Left ventricle myocardium inferior (tissue), 1 donor: ENCODE measurements at regions of chr17 and their contacts with region 1.

Region 1: GRCh38 chr17:49556223-49556971 is 19.3 kb upstream of the NXPH3 start:
- DNase-seq: peak; percentile 75
- H3K4me3 ChIP-seq: no peak overlapping the region
- H3K27ac ChIP-seq: no peak overlapping the region
- H3K4me1 ChIP-seq: peaks cover 9% of the 10 kb centered on the region
- H3K27me3 ChIP-seq: no peaks in the 10 kb centered on the region
- CTCF ChIP-seq: peak; percentile 99

Region 2: DNA sequence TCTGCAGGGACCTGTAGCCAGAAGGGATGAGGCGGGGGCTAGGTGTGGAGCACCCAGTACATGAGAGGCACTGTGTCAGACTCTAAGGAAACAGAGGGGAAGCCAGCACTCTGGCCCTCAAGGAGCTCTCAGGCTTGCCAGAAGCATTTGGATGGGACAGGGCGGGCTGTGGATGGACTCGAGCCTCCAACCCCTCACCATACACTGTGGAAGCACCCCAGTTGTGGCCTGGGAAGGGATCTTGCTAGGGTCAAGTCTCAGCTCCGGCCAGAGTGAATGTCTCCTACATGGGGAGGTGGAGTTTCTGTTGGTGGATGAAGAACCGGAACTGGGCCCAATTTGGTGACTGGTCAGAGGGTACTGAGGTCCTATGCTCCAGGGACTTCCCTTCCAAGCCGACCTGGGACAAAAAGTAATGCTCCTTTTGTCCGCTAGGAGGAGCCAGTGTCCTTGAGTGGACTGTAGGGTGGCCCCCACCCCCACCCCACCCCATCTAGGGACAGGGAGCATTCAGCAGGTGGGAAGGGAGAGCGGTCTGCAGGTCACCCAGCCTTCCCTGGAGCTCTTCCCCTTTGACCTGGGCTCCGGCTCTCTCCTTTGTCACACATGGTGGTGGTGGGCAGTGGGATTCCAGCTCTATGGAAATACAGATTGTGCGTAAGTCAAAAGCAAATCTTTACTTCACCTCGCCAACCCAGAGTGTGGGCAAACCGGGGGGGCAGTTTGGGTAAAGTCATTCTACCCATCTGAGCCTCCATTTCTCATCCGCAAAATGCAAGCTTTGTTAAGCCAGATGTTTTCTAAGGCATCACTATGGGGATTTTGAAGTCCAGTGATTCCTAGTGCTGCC is 121.4 kb before region 1 on chr17:
- intact Hi-C with region 1: loop called (anchors 5 kb)
- DNase-seq: no peak
- H3K4me3 ChIP-seq: no peak overlapping the region
- H3K27ac ChIP-seq: no peak overlapping the region
- H3K4me1 ChIP-seq: peaks cover 6% of the 10 kb centered on the region
- H3K27me3 ChIP-seq: peaks cover 42% of the 10 kb centered on the region
- CTCF ChIP-seq: peak; percentile 83

Region 3: GRCh38 chr17:49501504-49501903 is 54.9 kb before region 1 on chr17:
- intact Hi-C with region 1: loop called (anchors 5 kb)
- DNase-seq: no peak
- H3K4me3 ChIP-seq: no peak overlapping the region
- H3K27ac ChIP-seq: no peak overlapping the region
- H3K4me1 ChIP-seq: peaks cover 23% of the 10 kb centered on the region
- H3K27me3 ChIP-seq: peaks cover 96% of the 10 kb centered on the region
- CTCF ChIP-seq: no peak